Gastrocnemius medialis (tissue), 4 donors: ENCODE measurements at regions of chr21 and their contacts with region 1.

Region 1: DNA sequence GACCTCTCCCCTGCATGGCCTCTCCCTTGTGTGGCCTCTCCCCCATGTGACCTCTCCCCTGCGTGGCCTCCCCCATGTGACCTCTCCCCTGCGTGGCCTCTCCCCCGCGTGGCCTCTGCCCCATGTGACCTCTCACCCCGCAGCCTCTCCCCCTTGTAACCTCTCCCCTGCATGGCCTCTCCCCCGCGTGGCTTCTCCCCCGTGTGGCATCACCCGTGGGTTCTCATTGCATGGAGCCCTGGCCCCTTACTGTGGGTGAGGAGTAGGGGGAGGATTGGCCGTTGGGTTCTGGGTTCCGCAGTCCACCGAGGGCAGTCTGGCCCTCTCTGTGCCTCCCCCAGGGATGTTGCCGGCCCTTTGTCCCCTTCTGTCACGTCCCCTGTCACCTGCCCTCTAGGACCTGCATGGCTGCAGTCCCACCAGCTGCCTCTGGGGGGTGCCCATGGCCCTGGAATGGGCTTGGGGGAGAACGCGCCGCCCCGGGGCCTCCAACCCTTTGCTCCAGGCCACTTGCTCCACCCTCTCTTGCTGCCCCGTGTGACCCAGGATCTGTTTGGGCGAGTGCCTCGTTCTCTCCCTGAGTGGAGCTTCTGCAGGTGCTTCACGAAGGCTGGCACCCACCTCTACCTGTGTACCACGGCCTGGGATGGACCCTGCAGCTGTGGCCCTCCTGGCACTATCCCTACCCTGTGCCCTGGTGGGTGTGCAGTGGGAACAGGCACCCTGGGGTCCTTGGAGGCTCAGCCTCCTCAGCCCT is 21.3 kb downstream of the RRP1 start:
- DNase-seq: peak; percentile 72 to 89
- ATAC-seq: peak; percentile 75 to 80
- H3K4me3 ChIP-seq: peak overlapping the region in 2 of 4 donors; percentile 11 to 18
- H3K27ac ChIP-seq: peak overlapping the region in 2 of 4 donors; percentile 50
- H3K4me1 ChIP-seq: peaks cover 21% of the 10 kb centered on the region in 2 donors
- H3K27me3 ChIP-seq: no peaks in the 10 kb centered on the region
- CTCF ChIP-seq: peak; percentile 93 to 99 (median 97)
- POLR2A ChIP-seq: no peak

Region 2: GRCh38 chr21:43718872-43719747 is 91.6 kb before region 1 on chr21 and contains the start of gene PDXK:
- in situ Hi-C with region 1: loop called in 1 of 4 experiments (anchors 25 kb)
- intact Hi-C with region 1: no loop called
- DNase-seq: peak; percentile 72 to 77
- ATAC-seq: peak; percentile 89 to 90
- H3K4me3 ChIP-seq: peak within 1 kb of the TSS; percentile 59 to 97 (median 76)
- H3K27ac ChIP-seq: peak within 1 kb of the TSS; percentile 49 to 82 (median 76)
- H3K4me1 ChIP-seq: peaks cover 13 to 18% of the 10 kb centered on the region in 2 donors
- H3K27me3 ChIP-seq: no peaks in the 10 kb centered on the region
- CTCF ChIP-seq: no peak
- POLR2A ChIP-seq: peak; percentile 86 to 90
- total RNA-seq, gene PDXK: 12.4 to 39.2 (median 21.9) TPM

Region 3: DNA sequence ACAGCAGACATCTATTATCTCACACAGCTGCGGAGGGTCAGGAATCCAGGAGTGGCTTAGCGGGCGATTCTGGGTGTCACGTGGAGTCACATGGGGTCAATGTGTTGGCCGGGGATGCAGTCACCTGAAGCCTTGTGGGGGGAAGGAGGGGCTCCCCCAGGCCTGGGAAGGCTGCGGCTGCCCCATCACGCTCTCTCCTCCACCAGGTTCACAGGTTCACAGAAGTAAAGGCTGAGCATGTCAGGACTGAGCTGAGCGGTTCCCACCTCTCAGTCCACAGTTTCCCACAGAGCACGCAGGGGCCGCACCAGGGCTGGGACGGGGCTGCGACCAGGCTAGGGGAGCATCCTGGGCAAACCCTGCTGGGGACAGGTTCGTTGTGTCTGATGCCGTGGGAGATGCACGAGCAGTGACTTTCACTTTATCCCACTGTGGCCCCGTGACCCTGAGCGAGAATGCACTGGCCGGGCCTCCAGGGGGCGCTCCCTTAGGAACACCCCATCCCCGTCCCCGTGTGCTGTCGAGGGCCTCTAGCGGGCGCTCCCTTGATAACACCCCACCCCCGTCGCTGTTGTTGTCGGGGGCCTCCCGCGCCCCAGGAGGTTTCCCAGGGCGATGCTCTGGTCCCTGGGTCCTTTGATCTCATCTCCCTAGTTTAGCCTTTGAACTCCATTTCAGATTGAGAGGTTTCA is 128.2 kb after region 1 on chr21:
- in situ Hi-C with region 1: no loop called
- intact Hi-C with region 1: loop called (anchors 2 kb)
- DNase-seq: peak; percentile 61 to 82
- ATAC-seq: peak; percentile 68 to 70
- H3K4me3 ChIP-seq: peak overlapping the region; percentile 43 to 50 (median 47)
- H3K27ac ChIP-seq: peak overlapping the region; percentile 70 to 98 (median 85)
- H3K4me1 ChIP-seq: peaks cover 33 to 56% of the 10 kb centered on the region in 2 donors
- H3K27me3 ChIP-seq: no peaks in the 10 kb centered on the region
- CTCF ChIP-seq: peak; percentile 91 to 97 (median 94)
- POLR2A ChIP-seq: peak in 1 of 2 donors; percentile 33

Region 4: DNA sequence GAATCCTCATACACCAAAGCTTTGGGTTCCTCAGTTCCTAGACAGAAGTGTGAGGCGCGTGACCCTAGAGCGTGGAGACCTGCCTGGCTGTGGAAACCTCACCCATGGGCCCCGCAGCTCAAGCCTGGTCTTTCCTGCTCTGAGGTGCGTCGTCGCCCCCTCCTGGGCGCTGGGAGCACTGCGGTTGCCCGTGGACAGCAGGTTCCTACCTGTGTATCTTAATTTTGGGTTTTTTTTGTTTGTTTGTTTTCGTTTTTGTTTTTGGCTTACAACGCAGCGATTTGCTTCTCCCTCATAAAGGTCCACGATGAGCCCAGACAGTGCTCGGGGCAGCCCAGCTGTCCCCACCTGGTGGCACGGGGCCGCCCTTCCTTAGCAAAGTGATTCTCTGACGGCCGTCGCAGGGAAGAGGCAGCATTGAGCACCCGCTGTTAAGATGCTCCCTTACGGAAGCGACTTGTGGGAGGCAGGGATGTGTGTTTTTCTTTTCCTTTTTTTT is 164.9 kb after region 1 on chr21:
- in situ Hi-C with region 1: no loop called
- intact Hi-C with region 1: loop called (anchors 1 kb)
- DNase-seq: peak; percentile 47 to 78
- ATAC-seq: peak; percentile 44 to 60
- H3K4me3 ChIP-seq: no peak overlapping the region
- H3K27ac ChIP-seq: peak overlapping the region in 1 of 4 donors; percentile 15
- H3K4me1 ChIP-seq: peaks cover 0 to 16% of the 10 kb centered on the region in 2 donors
- H3K27me3 ChIP-seq: no peaks in the 10 kb centered on the region
- CTCF ChIP-seq: peak; percentile 90 to 96 (median 92)
- POLR2A ChIP-seq: no peak